CD8-positive, alpha-beta memory T cell (primary cell): ENCODE measurements at regions of chr17 and their contacts with region 1.

Region 1: GRCh38 chr17:67221062-67221998 is 23.7 kb downstream of the HELZ start:
- DNase-seq: peak in 2 of 5 donors; percentile 18 to 49
- H3K4me3 ChIP-seq: no peak overlapping the region
- H3K4me3 Mint-ChIP-seq: peak overlapping the region in 1 of 7 donors; percentile 33
- H3K27ac ChIP-seq: no peak overlapping the region
- H3K27ac Mint-ChIP-seq: peak overlapping the region in 7 of 8 donors; percentile 0 to 91 (median 70)
- H3K4me1 ChIP-seq: peaks cover 21% of the 10 kb centered on the region
- H3K4me1 Mint-ChIP-seq: peaks cover 47 to 70% (median 69%) of the 10 kb centered on the region in 3 donors
- H3K27me3 ChIP-seq: no peaks in the 10 kb centered on the region
- H3K27me3 Mint-ChIP-seq: no peaks in the 10 kb centered on the region

Region 2: GRCh38 chr17:66975604-66976384 is 245.5 kb before region 1 on chr17:
- CTCF ChIA-PET with region 1: no interaction called
- POLR2A ChIA-PET with region 1: no interaction called
- DNase-seq: no peak
- H3K4me3 ChIP-seq: no peak overlapping the region
- H3K4me3 Mint-ChIP-seq: no peak overlapping the region
- H3K27ac ChIP-seq: no peak overlapping the region
- H3K27ac Mint-ChIP-seq: no peak overlapping the region
- H3K4me1 ChIP-seq: no peaks in the 10 kb centered on the region
- H3K4me1 Mint-ChIP-seq: no peaks in the 10 kb centered on the region
- H3K27me3 ChIP-seq: no peaks in the 10 kb centered on the region
- H3K27me3 Mint-ChIP-seq: peaks cover 32 to 64% of the 10 kb centered on the region in 2 donors

Region 3: GRCh38 chr17:67042104-67042899 is 179.0 kb before region 1 on chr17:
- CTCF ChIA-PET with region 1: no interaction called
- POLR2A ChIA-PET with region 1: no interaction called
- DNase-seq: no peak
- H3K4me3 ChIP-seq: no peak overlapping the region
- H3K4me3 Mint-ChIP-seq: no peak overlapping the region
- H3K27ac ChIP-seq: no peak overlapping the region
- H3K27ac Mint-ChIP-seq: no peak overlapping the region
- H3K4me1 ChIP-seq: no peaks in the 10 kb centered on the region
- H3K4me1 Mint-ChIP-seq: no peaks in the 10 kb centered on the region
- H3K27me3 ChIP-seq: no peaks in the 10 kb centered on the region
- H3K27me3 Mint-ChIP-seq: peaks cover 7 to 9% of the 10 kb centered on the region in 2 donors

Region 4: DNA sequence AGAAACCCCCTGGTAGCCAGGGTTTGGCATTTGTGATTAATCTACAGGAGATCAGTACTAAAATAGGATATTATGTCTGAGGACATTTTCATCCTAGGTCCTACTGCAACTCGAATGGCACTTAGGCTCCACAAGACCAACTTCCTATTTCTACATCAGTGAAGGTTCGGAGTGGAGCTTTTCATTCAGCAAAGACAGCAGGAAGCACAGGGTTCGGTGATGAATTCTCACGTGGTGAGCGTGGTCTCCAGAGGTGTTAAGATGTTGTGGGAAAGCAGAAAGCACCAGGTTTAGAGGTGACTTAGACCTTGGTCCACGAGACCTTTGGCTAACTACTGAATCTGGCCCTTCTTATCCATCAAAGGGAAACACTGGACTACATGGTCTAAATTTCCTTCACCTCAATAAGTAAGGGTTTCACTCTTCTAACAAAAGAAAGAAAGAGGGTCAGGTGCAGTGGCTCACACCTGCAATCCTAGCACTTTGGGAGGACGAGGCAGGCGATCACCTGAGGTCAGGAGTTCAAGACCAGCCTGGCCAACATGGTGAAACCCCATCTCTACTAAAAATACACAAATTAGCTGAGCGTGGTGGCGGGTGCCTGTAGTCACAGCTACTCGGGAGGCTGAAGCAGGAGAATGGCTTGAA is 37.6 kb after region 1 on chr17:
- CTCF ChIA-PET with region 1: interaction called, 14 read pairs
- POLR2A ChIA-PET with region 1: no interaction called
- DNase-seq: peak in 4 of 5 donors; percentile 26 to 71 (median 58)
- H3K4me3 ChIP-seq: no peak overlapping the region
- H3K4me3 Mint-ChIP-seq: peak overlapping the region; percentile 65 to 82 (median 78)
- H3K27ac ChIP-seq: no peak overlapping the region
- H3K27ac Mint-ChIP-seq: peak overlapping the region; percentile 23 to 93 (median 82)
- H3K4me1 ChIP-seq: peaks cover 22% of the 10 kb centered on the region
- H3K4me1 Mint-ChIP-seq: peaks cover 28 to 49% (median 46%) of the 10 kb centered on the region in 3 donors
- H3K27me3 ChIP-seq: no peaks in the 10 kb centered on the region
- H3K27me3 Mint-ChIP-seq: no peaks in the 10 kb centered on the region

Region 5: GRCh38 chr17:67272312-67273050 is 51.2 kb after region 1 on chr17:
- CTCF ChIA-PET with region 1: interaction called, 15 read pairs
- POLR2A ChIA-PET with region 1: no interaction called
- DNase-seq: no peak
- H3K4me3 ChIP-seq: no peak overlapping the region
- H3K4me3 Mint-ChIP-seq: no peak overlapping the region
- H3K27ac ChIP-seq: no peak overlapping the region
- H3K27ac Mint-ChIP-seq: peak overlapping the region in 1 of 8 donors; percentile 47
- H3K4me1 ChIP-seq: no peaks in the 10 kb centered on the region
- H3K4me1 Mint-ChIP-seq: peaks cover 0 to 6% (median 6%) of the 10 kb centered on the region in 3 donors
- H3K27me3 ChIP-seq: no peaks in the 10 kb centered on the region
- H3K27me3 Mint-ChIP-seq: no peaks in the 10 kb centered on the region

Region 6: GRCh38 chr17:67293251-67294203 is 72.2 kb after region 1 on chr17:
- CTCF ChIA-PET with region 1: interaction called, 44 read pairs
- POLR2A ChIA-PET with region 1: no interaction called
- DNase-seq: peak; percentile 44 to 79 (median 60)
- H3K4me3 ChIP-seq: no peak overlapping the region
- H3K4me3 Mint-ChIP-seq: peak overlapping the region in 4 of 7 donors; percentile 26 to 81 (median 58)
- H3K27ac ChIP-seq: no peak overlapping the region
- H3K27ac Mint-ChIP-seq: peak overlapping the region in 4 of 8 donors; percentile 14 to 86 (median 50)
- H3K4me1 ChIP-seq: no peaks in the 10 kb centered on the region
- H3K4me1 Mint-ChIP-seq: peaks cover 5 to 14% (median 6%) of the 10 kb centered on the region in 3 donors
- H3K27me3 ChIP-seq: no peaks in the 10 kb centered on the region
- H3K27me3 Mint-ChIP-seq: no peaks in the 10 kb centered on the region

Region 7: GRCh38 chr17:67326441-67326840 is 105.1 kb after region 1 on chr17:
- CTCF ChIA-PET with region 1: no interaction called
- POLR2A ChIA-PET with region 1: no interaction called
- DNase-seq: no peak
- H3K4me3 ChIP-seq: no peak overlapping the region
- H3K4me3 Mint-ChIP-seq: no peak overlapping the region
- H3K27ac ChIP-seq: no peak overlapping the region
- H3K27ac Mint-ChIP-seq: no peak overlapping the region
- H3K4me1 ChIP-seq: no peaks in the 10 kb centered on the region
- H3K4me1 Mint-ChIP-seq: no peaks in the 10 kb centered on the region
- H3K27me3 ChIP-seq: no peaks in the 10 kb centered on the region
- H3K27me3 Mint-ChIP-seq: no peaks in the 10 kb centered on the region